Gastrocnemius medialis (tissue), 4 donors: ENCODE measurements at regions of chr21 and their contacts with region 1.

Region 1: DNA sequence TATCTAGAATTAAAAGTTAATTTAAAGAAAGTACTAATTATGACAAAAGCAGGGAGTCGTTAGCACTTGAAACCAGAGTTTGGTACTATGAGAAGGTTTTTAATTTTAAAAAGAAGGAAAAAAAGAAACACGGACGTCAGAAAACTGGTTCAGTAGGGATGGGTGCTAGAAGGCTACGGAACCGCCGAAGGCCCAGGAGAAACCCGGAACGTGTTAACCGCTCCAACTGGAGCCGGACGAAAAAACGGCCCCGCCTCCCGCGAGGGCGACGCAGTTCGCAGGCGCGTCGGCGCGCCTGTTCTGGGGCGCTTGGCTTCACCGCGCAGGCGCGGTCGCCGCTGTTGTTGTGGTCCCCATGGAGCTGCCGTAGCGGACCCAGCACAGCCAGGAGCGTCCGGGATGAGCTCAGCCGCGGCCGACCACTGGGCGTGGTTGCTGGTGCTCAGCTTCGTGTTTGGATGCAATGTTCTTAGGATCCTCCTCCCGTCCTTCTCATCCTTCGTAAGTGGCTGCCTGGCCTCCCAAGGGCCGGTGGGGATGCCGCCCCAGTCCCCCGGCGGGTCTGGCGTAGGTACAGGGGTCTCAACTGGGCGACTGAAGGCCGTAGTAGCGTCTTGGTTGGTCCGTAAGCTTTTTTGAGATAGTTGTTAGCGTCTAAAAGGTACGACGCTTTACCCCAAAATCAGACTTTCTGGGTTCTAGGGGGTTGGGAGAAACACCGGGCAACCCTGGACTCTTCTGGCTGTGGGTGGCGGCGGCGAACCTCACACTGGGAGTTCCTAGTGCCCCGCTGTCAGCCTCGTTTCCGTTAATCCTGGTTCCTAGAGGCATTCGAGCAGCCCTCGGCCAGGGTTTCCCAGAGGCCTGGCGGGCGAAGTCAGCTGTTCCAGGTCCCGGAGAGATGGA is 31.4 kb upstream of the HMGN1 start:
- DNase-seq: peak; percentile 86 to 94
- ATAC-seq: peak; percentile 93 to 95
- H3K4me3 ChIP-seq: peak overlapping the region; percentile 64 to 90 (median 78)
- H3K27ac ChIP-seq: peak overlapping the region; percentile 82 to 91 (median 86)
- H3K4me1 ChIP-seq: peaks cover 9 to 13% of the 10 kb centered on the region in 2 donors
- H3K27me3 ChIP-seq: no peaks in the 10 kb centered on the region
- CTCF ChIP-seq: no peak
- POLR2A ChIP-seq: peak; percentile 51 to 64

Region 2: GRCh38 chr21:39349211-39350093 is 30.8 kb before region 1 on chr21:
- in situ Hi-C with region 1: loop called in 1 of 4 experiments (anchors 5 kb)
- intact Hi-C with region 1: loop called (anchors 1 kb)
- DNase-seq: peak; percentile 89 to 92
- ATAC-seq: peak; percentile 91 to 95
- H3K4me3 ChIP-seq: peak overlapping the region; percentile 57 to 81 (median 72)
- H3K27ac ChIP-seq: peak overlapping the region; percentile 79 to 87 (median 82)
- H3K4me1 ChIP-seq: peaks cover 15% of the 10 kb centered on the region in 2 donors
- H3K27me3 ChIP-seq: no peaks in the 10 kb centered on the region
- CTCF ChIP-seq: no peak
- POLR2A ChIP-seq: peak in 1 of 2 donors; percentile 8

Region 3: GRCh38 chr21:39445321-39446269 is 65.4 kb after region 1 on chr21 and contains the start of gene LCA5L:
- in situ Hi-C with region 1: no loop called
- intact Hi-C with region 1: loop called (anchors 2 kb)
- DNase-seq: peak; percentile 83 to 88
- ATAC-seq: peak; percentile 90 to 92
- H3K4me3 ChIP-seq: peak within 1 kb of the TSS; percentile 81 to 100 (median 86)
- H3K27ac ChIP-seq: peak within 1 kb of the TSS; percentile 85 to 94 (median 92)
- H3K4me1 ChIP-seq: peaks cover 9 to 14% of the 10 kb centered on the region in 2 donors
- H3K27me3 ChIP-seq: no peaks in the 10 kb centered on the region
- CTCF ChIP-seq: no peak
- POLR2A ChIP-seq: peak; percentile 85 to 93
- total RNA-seq, gene LCA5L: 2.3 to 7.9 (median 4.9) TPM